BJ (cell line): ENCODE measurements at regions of chr11 and their contacts with region 1.

Region 1: DNA sequence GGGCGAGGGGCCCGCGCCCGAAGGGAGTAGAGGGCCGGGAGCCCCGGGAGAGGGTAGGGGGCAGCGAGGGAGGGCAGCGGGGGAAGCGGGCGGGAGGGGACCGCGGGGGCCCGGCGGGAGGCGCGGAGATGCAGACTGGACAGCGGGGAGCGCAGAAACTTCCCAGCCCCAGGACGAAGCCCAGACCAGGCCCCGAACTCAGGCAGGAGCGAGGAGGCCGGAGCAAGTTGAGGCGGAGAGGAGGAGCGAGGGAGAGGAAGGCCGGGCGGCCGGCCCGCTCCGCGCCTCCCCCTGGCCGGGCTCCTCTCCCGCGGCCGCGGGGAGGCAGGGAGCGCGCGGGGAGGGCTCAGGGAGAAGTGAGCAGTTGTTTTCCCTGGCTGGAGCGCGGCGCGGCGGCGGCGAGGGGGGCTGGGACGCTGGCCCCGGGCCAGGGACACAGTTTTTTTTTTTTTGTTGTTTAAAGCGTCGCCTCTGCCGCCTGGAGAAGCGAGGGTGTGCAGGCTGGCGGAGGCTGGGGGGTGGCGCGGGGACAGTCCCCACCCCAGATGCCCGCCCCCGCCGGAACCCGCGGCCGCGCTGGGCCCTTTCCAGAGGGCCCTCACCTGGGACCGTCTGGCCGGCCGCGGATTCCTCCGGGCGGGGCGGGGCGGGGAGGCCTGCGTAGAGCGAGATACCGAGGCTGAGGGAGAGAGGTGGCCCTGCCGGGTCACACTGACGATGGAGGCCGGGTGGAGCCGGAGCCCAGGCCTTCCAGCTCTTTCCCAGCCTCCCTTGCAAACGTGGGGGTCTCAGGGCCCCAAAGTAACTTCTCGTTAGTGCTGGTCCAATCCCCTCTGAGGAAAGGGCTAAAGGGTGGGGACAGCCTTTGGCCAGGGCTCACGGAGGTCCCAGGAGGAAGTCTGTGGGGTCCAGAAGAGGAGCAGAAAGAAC is at the start of gene LTBP3:
- DNase-seq: no peak
- H3K4me3 ChIP-seq: peak within 1 kb of the TSS; percentile 70
- H3K27me3 ChIP-seq: no peaks in the 10 kb centered on the region
- CTCF ChIP-seq: 0 out of 2 replicates have a peak, but pooled peaks have one; percentile 2
- polyA plus RNA-seq, gene LTBP3: 37.9 and 77.7 TPM in 2 replicates

Region 2: GRCh38 chr11:65569973-65570918 is 12.0 kb after region 1 on chr11 and contains the start of gene ZNRD2:
- CTCF ChIA-PET with region 1: interaction called, 20 read pairs
- POLR2A ChIA-PET with region 1: interaction called, 4 read pairs
- DNase-seq: peak; percentile 89
- H3K4me3 ChIP-seq: peak within 1 kb of the TSS; percentile 93
- H3K27me3 ChIP-seq: no peaks in the 10 kb centered on the region
- CTCF ChIP-seq: peak; percentile 57
- polyA plus RNA-seq, gene ZNRD2: 48.7 and 73.3 TPM in 2 replicates

Region 3: GRCh38 chr11:66408488-66409214 is 850.4 kb after region 1 on chr11:
- CTCF ChIA-PET with region 1: no interaction called
- POLR2A ChIA-PET with region 1: no interaction called
- DNase-seq: peak; percentile 63
- H3K4me3 ChIP-seq: peak overlapping the region; percentile 54
- H3K27me3 ChIP-seq: peaks cover 13% of the 10 kb centered on the region
- CTCF ChIP-seq: peak; percentile 99